Activated CD4-positive, alpha-beta memory T cell treated with anti-CD3 and anti-CD28 coated beads for 36 hours (primary cell): ENCODE measurements at regions of chr10 and their contacts with region 1.

Region 1: GRCh38 chr10:79195091-79195923 is 126.5 kb downstream of the ZMIZ1 start:
- DNase-seq: peak; percentile 86
- H3K4me3 Mint-ChIP-seq: no peak overlapping the region
- H3K27ac Mint-ChIP-seq: no peak overlapping the region
- H3K4me1 Mint-ChIP-seq: no peaks in the 10 kb centered on the region
- H3K27me3 Mint-ChIP-seq: no peaks in the 10 kb centered on the region

Region 2: DNA sequence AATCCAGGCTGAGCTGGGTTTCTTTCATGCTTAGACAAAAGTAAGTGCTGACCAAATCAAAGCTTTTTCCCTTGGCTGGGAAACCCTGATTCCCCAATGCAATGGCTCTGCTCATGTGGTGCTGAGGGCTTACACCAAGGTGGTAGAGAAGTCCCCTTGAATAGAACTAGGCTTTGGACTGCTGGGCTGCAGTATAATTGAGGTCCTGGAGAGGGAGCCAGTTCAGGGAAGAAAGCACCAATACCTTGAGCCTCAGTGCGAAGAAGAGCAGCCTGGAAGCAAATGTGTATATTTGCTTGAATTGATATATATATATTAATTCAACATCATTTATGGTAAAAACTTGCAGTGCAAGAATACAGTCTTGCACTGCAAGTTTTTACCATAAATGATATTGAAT is 770.6 kb before region 1 on chr10:
- CTCF ChIA-PET with region 1: interaction called, 3 read pairs
- POLR2A ChIA-PET with region 1: no interaction called
- intact Hi-C with region 1: loop called (anchors 10 kb)
- DNase-seq: no peak
- H3K4me3 Mint-ChIP-seq: no peak overlapping the region
- H3K27ac Mint-ChIP-seq: no peak overlapping the region
- H3K4me1 Mint-ChIP-seq: no peaks in the 10 kb centered on the region
- H3K27me3 Mint-ChIP-seq: peaks cover 8% of the 10 kb centered on the region

Region 3: GRCh38 chr10:78664929-78665553 is 530.3 kb before region 1 on chr10:
- CTCF ChIA-PET with region 1: interaction called, 40 read pairs
- POLR2A ChIA-PET with region 1: no interaction called
- intact Hi-C with region 1: loop called (anchors 5 kb)
- DNase-seq: peak; percentile 23
- H3K4me3 Mint-ChIP-seq: no peak overlapping the region
- H3K27ac Mint-ChIP-seq: no peak overlapping the region
- H3K4me1 Mint-ChIP-seq: no peaks in the 10 kb centered on the region
- H3K27me3 Mint-ChIP-seq: peaks cover 32% of the 10 kb centered on the region

Region 4: GRCh38 chr10:78852466-78853240 is 342.7 kb before region 1 on chr10:
- CTCF ChIA-PET with region 1: interaction called, 37 read pairs
- POLR2A ChIA-PET with region 1: no interaction called
- intact Hi-C with region 1: loop called (anchors 2 kb)
- DNase-seq: peak; percentile 32
- H3K4me3 Mint-ChIP-seq: no peak overlapping the region
- H3K27ac Mint-ChIP-seq: no peak overlapping the region
- H3K4me1 Mint-ChIP-seq: no peaks in the 10 kb centered on the region
- H3K27me3 Mint-ChIP-seq: no peaks in the 10 kb centered on the region

Region 5: DNA sequence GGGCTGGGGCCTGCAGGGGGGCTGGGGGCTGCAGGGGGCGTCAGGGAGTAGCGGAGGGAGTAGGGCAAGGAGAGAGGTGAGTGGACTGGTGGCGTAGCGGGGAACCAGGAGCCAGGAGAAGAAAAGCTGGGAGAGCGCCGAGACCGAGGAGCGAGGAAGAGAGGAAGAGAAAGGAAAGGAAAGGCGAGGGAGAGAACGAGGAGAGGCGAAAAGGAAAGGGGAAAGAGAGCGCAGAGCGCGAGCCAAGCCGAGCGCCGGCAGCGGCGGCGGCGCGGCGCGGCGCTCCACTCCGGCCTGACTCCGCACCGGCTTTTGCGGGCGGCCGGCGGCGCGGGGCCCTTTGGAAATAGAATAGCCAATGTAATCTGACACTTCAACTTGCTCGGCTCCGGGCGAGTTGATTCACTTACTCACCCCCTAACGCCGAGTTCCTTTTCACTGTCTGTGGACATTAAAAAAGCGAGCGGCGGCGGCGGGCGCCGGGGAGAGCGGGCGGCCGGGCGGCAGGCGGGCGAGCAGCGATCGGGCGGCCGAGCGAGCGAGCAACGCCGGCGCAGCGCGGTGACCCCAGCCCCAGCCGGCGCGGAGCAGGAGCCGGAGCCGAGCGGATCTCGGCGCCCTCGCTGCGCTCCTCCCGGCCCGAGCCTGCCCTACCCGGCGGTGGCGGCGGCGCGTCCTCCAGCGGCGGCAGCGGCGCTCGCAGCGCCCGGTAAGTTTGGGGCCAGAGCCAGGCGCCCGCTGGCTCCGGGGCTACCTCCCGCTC is 126.6 kb before region 1 on chr10 and contains the start of gene ZMIZ1:
- CTCF ChIA-PET with region 1: interaction called, 7 read pairs
- POLR2A ChIA-PET with region 1: no interaction called
- intact Hi-C with region 1: loop called (anchors 1 kb)
- DNase-seq: peak; percentile 88
- H3K4me3 Mint-ChIP-seq: peak within 1 kb of the TSS; percentile 89
- H3K27ac Mint-ChIP-seq: peak within 1 kb of the TSS; percentile 66
- H3K4me1 Mint-ChIP-seq: peaks cover 36% of the 10 kb centered on the region
- H3K27me3 Mint-ChIP-seq: no peaks in the 10 kb centered on the region
- total RNA-seq, gene ZMIZ1: 28.5 to 29.2 TPM

Region 6: GRCh38 chr10:79184145-79184625 is 11.1 kb before region 1 on chr10:
- CTCF ChIA-PET with region 1: interaction called, 11 read pairs
- POLR2A ChIA-PET with region 1: no interaction called
- intact Hi-C with region 1: no loop called
- DNase-seq: no peak
- H3K4me3 Mint-ChIP-seq: no peak overlapping the region
- H3K27ac Mint-ChIP-seq: no peak overlapping the region
- H3K4me1 Mint-ChIP-seq: no peaks in the 10 kb centered on the region
- H3K27me3 Mint-ChIP-seq: no peaks in the 10 kb centered on the region